ENCODE measurements at regions of chr19 and their contacts with region 1.

Region 1: DNA sequence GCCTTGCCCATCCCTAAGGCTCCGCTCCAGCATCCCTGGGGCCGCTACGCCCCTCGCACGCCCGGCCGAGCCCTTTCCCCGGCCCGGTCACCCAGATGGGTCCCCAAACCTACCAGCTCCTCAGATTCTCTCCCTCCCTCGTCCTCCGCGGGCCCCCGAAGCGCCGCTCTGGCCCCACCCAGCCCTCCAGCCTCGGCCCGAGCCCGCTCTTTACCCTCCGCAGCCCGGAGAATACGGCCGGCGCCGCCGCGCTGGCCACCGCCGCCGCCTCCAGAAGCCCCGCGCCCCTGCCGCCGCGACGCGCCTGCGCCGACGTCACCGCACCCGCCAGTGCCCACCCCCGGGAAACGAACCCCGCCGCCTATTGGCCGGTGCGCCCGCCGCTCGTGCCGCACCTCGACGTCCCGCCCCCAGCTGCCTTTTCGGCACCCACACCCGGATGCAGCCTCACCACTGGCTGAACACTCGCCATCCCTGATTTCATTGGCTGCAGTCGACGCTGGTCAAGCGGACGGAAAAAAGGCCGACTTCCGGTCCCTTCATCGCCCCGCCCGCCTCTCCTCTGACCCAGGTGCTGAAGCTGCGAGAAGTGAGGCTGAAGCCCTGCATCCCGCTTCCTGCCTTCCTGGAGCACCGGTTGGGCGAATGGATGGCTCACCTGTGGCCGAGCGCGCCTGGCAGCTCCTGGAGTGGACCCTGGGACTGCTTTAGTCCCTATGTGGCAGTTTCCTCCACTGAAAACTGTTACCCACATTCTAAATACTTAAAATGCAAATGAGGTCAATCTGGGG is at the start of gene DAPK3:
- DNase-seq: peak; percentile 99
- H3K4me3 ChIP-seq: peak within 1 kb of the TSS; percentile 88 to 100 (median 98)
- H3K27ac ChIP-seq: peak within 1 kb of the TSS; percentile 99 to 100 (median 100)
- H3K4me1 ChIP-seq: peaks cover 43 to 50% (median 48%) of the 10 kb centered on the region in 4 donors
- H3K27me3 ChIP-seq: no peaks in the 10 kb centered on the region
- CTCF ChIP-seq: peak in 1 of 3 experiments; percentile 34
- EP300 ChIP-seq: no peak
- POLR2A ChIP-seq: peak; percentile 96
- total RNA-seq, gene DAPK3: 140 to 226 (median 212) TPM

Region 2: GRCh38 chr19:3762501-3763459 is 208.2 kb before region 1 on chr19 and contains the start of gene MRPL54:
- intact Hi-C with region 1: loop called (anchors 10 kb)
- DNase-seq: peak; percentile 99
- H3K4me3 ChIP-seq: peak within 1 kb of the TSS; percentile 72 to 83 (median 77)
- H3K27ac ChIP-seq: peak within 1 kb of the TSS; percentile 94 to 99 (median 96)
- H3K4me1 ChIP-seq: peaks cover 30 to 50% (median 48%) of the 10 kb centered on the region in 4 donors
- H3K27me3 ChIP-seq: no peaks in the 10 kb centered on the region
- CTCF ChIP-seq: peak in 1 of 3 experiments; percentile 14
- EP300 ChIP-seq: peak; percentile 17
- POLR2A ChIP-seq: peak; percentile 53
- total RNA-seq, gene MRPL54: 45.2 to 84.3 (median 77.4) TPM

Region 3: GRCh38 chr19:4232958-4233853 is 262.2 kb after region 1 on chr19:
- intact Hi-C with region 1: no loop called
- DNase-seq: no peak
- H3K4me3 ChIP-seq: no peak overlapping the region
- H3K27ac ChIP-seq: no peak overlapping the region
- H3K4me1 ChIP-seq: peaks cover 0 to 7% (median 5%) of the 10 kb centered on the region in 4 donors
- H3K27me3 ChIP-seq: peaks cover 0 to 94% (median 13%) of the 10 kb centered on the region in 4 donors
- CTCF ChIP-seq: peak in 2 of 3 experiments; percentile 29 to 52
- EP300 ChIP-seq: no peak
- POLR2A ChIP-seq: no peak

Measured in esophagus muscularis mucosa (tissue), 4 donors.